Common myeloid progenitor, CD34-positive (primary cell): ENCODE measurements at regions of chr4 and their contacts with region 1.

Region 1: GRCh38 chr4:32775032-32775431 is 2054.9 kb downstream of the PCDH7 start:
- DNase-seq: peak; percentile 5 to 45 (median 45)
- H3K4me3 ChIP-seq: no peak overlapping the region
- H3K27ac ChIP-seq: no peak overlapping the region
- H3K4me1 ChIP-seq: no peaks in the 10 kb centered on the region
- H3K27me3 ChIP-seq: no peaks in the 10 kb centered on the region

Region 2: GRCh38 chr4:32374201-32374600 is 400.8 kb before region 1 on chr4:
- CTCF ChIA-PET with region 1: no interaction called
- POLR2A ChIA-PET with region 1: no interaction called
- DNase-seq: no peak
- H3K4me3 ChIP-seq: no peak overlapping the region
- H3K27ac ChIP-seq: no peak overlapping the region
- H3K4me1 ChIP-seq: no peaks in the 10 kb centered on the region
- H3K27me3 ChIP-seq: no peaks in the 10 kb centered on the region

Region 3: GRCh38 chr4:32462944-32463343 is 312.1 kb before region 1 on chr4:
- CTCF ChIA-PET with region 1: interaction called, 18 read pairs
- POLR2A ChIA-PET with region 1: no interaction called
- DNase-seq: peak; percentile 11 to 49 (median 43)
- H3K4me3 ChIP-seq: no peak overlapping the region
- H3K27ac ChIP-seq: no peak overlapping the region
- H3K4me1 ChIP-seq: no peaks in the 10 kb centered on the region
- H3K27me3 ChIP-seq: no peaks in the 10 kb centered on the region

Region 4: DNA sequence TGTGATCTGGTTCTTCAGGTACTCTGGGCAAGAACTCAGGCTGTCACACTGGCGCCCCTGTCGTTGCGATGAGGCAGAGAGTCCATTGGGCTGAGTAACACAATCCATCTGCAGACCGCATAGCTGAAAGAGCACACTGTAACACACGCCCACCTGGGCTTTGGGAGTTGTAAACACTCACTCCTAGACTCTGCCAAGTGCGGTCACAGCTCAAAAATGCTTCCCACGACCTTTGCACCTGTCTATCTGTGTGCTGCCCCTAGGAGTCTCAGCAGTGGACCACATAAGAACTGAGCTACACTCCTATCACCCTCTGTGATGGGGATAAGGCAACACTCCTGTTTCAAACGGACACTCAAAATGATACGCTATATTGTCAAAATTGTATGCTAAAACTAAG is 26.5 kb before region 1 on chr4:
- CTCF ChIA-PET with region 1: no interaction called
- POLR2A ChIA-PET with region 1: no interaction called
- DNase-seq: no peak
- H3K4me3 ChIP-seq: no peak overlapping the region
- H3K27ac ChIP-seq: no peak overlapping the region
- H3K4me1 ChIP-seq: no peaks in the 10 kb centered on the region
- H3K27me3 ChIP-seq: no peaks in the 10 kb centered on the region